Activated CD8-positive, alpha-beta T cell treated with anti-CD3 and anti-CD28 coated beads, Interleukin-2, amount 10 ng/mL, durations not matched to agents 7 days and 5 days (primary cell): ENCODE measurements at regions of chr19 and their contacts with region 1.

Region 1: GRCh38 chr19:17183858-17184321 is 31.3 kb upstream of the USE1 start:
- DNase-seq: peak; percentile 69
- ATAC-seq: peak; percentile 76
- H3K4me3 Mint-ChIP-seq: peak overlapping the region; percentile 77
- H3K27ac Mint-ChIP-seq: peak overlapping the region; percentile 96
- H3K4me1 Mint-ChIP-seq: peaks cover 55% of the 10 kb centered on the region
- H3K27me3 Mint-ChIP-seq: no peaks in the 10 kb centered on the region

Region 2: DNA sequence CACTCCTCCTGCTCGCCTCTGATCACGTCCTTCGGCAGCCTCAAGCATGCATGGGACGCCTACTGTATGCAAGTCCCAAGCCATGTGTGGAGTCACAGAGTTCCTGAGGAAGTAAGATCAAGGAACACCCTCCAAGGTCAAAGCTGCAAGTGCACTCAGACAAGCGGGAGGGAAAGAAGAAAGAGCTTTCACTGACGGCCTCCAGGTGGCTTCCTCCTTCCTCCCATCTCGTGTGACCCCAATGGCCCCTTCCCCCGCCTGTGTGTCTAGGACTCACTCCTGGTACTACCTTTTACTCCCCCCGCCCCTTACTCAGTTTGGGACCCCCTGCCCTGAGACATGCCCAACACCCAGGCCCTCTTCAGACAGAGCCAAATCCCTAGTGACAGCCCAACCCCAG is 114.7 kb before region 1 on chr19:
- CTCF ChIA-PET with region 1: interaction called, 25 read pairs
- POLR2A ChIA-PET with region 1: interaction called, 8 read pairs
- DNase-seq: no peak
- ATAC-seq: no peak
- H3K4me3 Mint-ChIP-seq: no peak overlapping the region
- H3K27ac Mint-ChIP-seq: peak overlapping the region; percentile 15
- H3K4me1 Mint-ChIP-seq: peaks cover 76% of the 10 kb centered on the region
- H3K27me3 Mint-ChIP-seq: no peaks in the 10 kb centered on the region

Region 3: GRCh38 chr19:17075035-17075863 is 108.6 kb before region 1 on chr19 and contains the starts of genes HAUS8 and MYO9B:
- CTCF ChIA-PET with region 1: interaction called, 5 read pairs
- POLR2A ChIA-PET with region 1: interaction called, 17 read pairs
- DNase-seq: peak; percentile 100
- ATAC-seq: peak; percentile 94
- H3K4me3 Mint-ChIP-seq: peak within 1 kb of the TSS; percentile 100
- H3K27ac Mint-ChIP-seq: peak within 1 kb of the TSS; percentile 96
- H3K4me1 Mint-ChIP-seq: peaks cover 65% of the 10 kb centered on the region
- H3K27me3 Mint-ChIP-seq: no peaks in the 10 kb centered on the region
- total RNA-seq, gene HAUS8: 66.0 to 66.7 TPM
- total RNA-seq, gene MYO9B: 276 to 280 TPM

Region 4: GRCh38 chr19:17125715-17126677 is 57.9 kb before region 1 on chr19:
- CTCF ChIA-PET with region 1: interaction called, 12 read pairs
- POLR2A ChIA-PET with region 1: interaction called, 25 read pairs
- DNase-seq: peak; percentile 92
- ATAC-seq: peak; percentile 95
- H3K4me3 Mint-ChIP-seq: peak overlapping the region; percentile 83
- H3K27ac Mint-ChIP-seq: peak overlapping the region; percentile 100
- H3K4me1 Mint-ChIP-seq: peaks cover 81% of the 10 kb centered on the region
- H3K27me3 Mint-ChIP-seq: no peaks in the 10 kb centered on the region

Region 5: GRCh38 chr19:17215125-17215971 is 31.5 kb after region 1 on chr19 and contains the start of gene USE1:
- CTCF ChIA-PET with region 1: interaction called, 5 read pairs
- POLR2A ChIA-PET with region 1: interaction called, 19 read pairs
- DNase-seq: peak; percentile 93
- ATAC-seq: peak; percentile 96
- H3K4me3 Mint-ChIP-seq: peak within 1 kb of the TSS; percentile 82
- H3K27ac Mint-ChIP-seq: peak within 1 kb of the TSS; percentile 98
- H3K4me1 Mint-ChIP-seq: peaks cover 27% of the 10 kb centered on the region
- H3K27me3 Mint-ChIP-seq: no peaks in the 10 kb centered on the region
- total RNA-seq, gene USE1: 26.5 to 27.9 TPM

Region 6: GRCh38 chr19:17226002-17226933 is 42.4 kb after region 1 on chr19 and contains the start of gene OCEL1:
- CTCF ChIA-PET with region 1: no interaction called
- POLR2A ChIA-PET with region 1: interaction called, 11 read pairs
- DNase-seq: peak; percentile 98
- ATAC-seq: peak; percentile 95
- H3K4me3 Mint-ChIP-seq: peak within 1 kb of the TSS; percentile 82
- H3K27ac Mint-ChIP-seq: peak within 1 kb of the TSS; percentile 96
- H3K4me1 Mint-ChIP-seq: peaks cover 8% of the 10 kb centered on the region
- H3K27me3 Mint-ChIP-seq: no peaks in the 10 kb centered on the region
- total RNA-seq, gene OCEL1: 24.3 to 28.3 TPM